ENCODE measurements at regions of chr4 and their contacts with region 1.

Region 1: DNA sequence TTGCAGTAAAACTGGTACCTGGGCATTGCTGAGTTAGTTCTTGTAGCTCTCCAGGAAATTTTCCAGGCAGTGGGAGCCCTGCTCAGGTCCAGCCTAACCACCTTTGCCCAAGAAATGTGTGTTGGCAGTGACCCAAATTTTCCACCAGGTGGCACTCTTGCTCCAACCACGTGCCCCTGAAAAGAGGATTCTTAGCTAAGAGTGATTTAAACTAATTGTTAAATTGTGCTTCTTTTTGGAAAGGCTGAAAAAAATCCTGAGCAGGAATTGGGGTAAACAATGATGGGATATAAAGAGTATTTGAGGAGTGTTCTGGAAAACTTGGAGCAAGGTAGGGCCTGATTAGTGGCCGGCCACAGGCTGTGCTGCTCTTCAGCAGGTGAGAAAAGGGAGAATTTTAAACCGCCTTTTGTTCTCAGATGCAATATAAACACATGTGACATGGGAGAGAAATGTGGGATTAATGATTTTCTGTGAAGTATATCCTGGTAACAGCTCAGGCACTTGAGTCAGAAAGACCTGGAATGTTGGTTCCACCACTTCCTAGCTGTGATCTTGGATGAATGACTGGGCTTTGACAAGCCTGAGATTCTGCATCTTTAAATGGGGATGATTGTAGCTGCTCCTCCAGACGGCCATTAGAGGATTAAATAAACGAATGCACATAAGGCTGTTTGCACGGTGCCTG is 219.6 kb downstream of the PTTG2 start:
- DNase-seq: peak; percentile 47 to 79 (median 69)
- ATAC-seq: peak; percentile 71
- H3K4me3 ChIP-seq: no peak overlapping the region
- H3K4me3 Mint-ChIP-seq: no peak overlapping the region
- H3K27ac ChIP-seq: no peak overlapping the region
- H3K27ac Mint-ChIP-seq: peak overlapping the region in 6 of 9 donors; percentile 2 to 55 (median 22)
- H3K4me1 ChIP-seq: peaks cover 17 to 21% of the 10 kb centered on the region in 2 donors
- H3K4me1 Mint-ChIP-seq: peaks cover 25 to 53% (median 46%) of the 10 kb centered on the region in 7 donors
- H3K27me3 ChIP-seq: no peaks in the 10 kb centered on the region
- H3K27me3 Mint-ChIP-seq: peaks cover 0 to 28% (median 0%) of the 10 kb centered on the region in 5 donors

Region 2: GRCh38 chr4:37503261-37503660 is 676.6 kb before region 1 on chr4:
- CTCF ChIA-PET with region 1: no interaction called
- POLR2A ChIA-PET with region 1: no interaction called
- intact Hi-C with region 1: no loop called
- DNase-seq: no peak
- ATAC-seq: no peak
- H3K4me3 ChIP-seq: no peak overlapping the region
- H3K4me3 Mint-ChIP-seq: no peak overlapping the region
- H3K27ac ChIP-seq: no peak overlapping the region
- H3K27ac Mint-ChIP-seq: no peak overlapping the region
- H3K4me1 ChIP-seq: no peaks in the 10 kb centered on the region
- H3K4me1 Mint-ChIP-seq: no peaks in the 10 kb centered on the region
- H3K27me3 ChIP-seq: no peaks in the 10 kb centered on the region
- H3K27me3 Mint-ChIP-seq: peaks cover 1 to 58% (median 37%) of the 10 kb centered on the region in 5 donors

Region 3: GRCh38 chr4:37803356-37803973 is 376.4 kb before region 1 on chr4:
- CTCF ChIA-PET with region 1: no interaction called
- POLR2A ChIA-PET with region 1: no interaction called
- intact Hi-C with region 1: no loop called
- DNase-seq: peak in 7 of 9 donors; percentile 18 to 60 (median 49)
- ATAC-seq: peak; percentile 54
- H3K4me3 ChIP-seq: no peak overlapping the region
- H3K4me3 Mint-ChIP-seq: no peak overlapping the region
- H3K27ac ChIP-seq: no peak overlapping the region
- H3K27ac Mint-ChIP-seq: no peak overlapping the region
- H3K4me1 ChIP-seq: no peaks in the 10 kb centered on the region
- H3K4me1 Mint-ChIP-seq: no peaks in the 10 kb centered on the region
- H3K27me3 ChIP-seq: no peaks in the 10 kb centered on the region
- H3K27me3 Mint-ChIP-seq: peaks cover 0 to 17% (median 0%) of the 10 kb centered on the region in 5 donors

Region 4: GRCh38 chr4:37896206-37896860 is 283.5 kb before region 1 on chr4:
- CTCF ChIA-PET with region 1: no interaction called
- POLR2A ChIA-PET with region 1: no interaction called
- intact Hi-C with region 1: no loop called
- DNase-seq: no peak
- ATAC-seq: no peak
- H3K4me3 ChIP-seq: no peak overlapping the region
- H3K4me3 Mint-ChIP-seq: peak overlapping the region in 4 of 10 donors; percentile 8 to 32 (median 21)
- H3K27ac ChIP-seq: no peak overlapping the region
- H3K27ac Mint-ChIP-seq: peak overlapping the region in 1 of 9 donors; percentile 68
- H3K4me1 ChIP-seq: peaks cover 10 to 14% of the 10 kb centered on the region in 2 donors
- H3K4me1 Mint-ChIP-seq: peaks cover 43 to 87% (median 76%) of the 10 kb centered on the region in 7 donors
- H3K27me3 ChIP-seq: no peaks in the 10 kb centered on the region
- H3K27me3 Mint-ChIP-seq: no peaks in the 10 kb centered on the region

Region 5: DNA sequence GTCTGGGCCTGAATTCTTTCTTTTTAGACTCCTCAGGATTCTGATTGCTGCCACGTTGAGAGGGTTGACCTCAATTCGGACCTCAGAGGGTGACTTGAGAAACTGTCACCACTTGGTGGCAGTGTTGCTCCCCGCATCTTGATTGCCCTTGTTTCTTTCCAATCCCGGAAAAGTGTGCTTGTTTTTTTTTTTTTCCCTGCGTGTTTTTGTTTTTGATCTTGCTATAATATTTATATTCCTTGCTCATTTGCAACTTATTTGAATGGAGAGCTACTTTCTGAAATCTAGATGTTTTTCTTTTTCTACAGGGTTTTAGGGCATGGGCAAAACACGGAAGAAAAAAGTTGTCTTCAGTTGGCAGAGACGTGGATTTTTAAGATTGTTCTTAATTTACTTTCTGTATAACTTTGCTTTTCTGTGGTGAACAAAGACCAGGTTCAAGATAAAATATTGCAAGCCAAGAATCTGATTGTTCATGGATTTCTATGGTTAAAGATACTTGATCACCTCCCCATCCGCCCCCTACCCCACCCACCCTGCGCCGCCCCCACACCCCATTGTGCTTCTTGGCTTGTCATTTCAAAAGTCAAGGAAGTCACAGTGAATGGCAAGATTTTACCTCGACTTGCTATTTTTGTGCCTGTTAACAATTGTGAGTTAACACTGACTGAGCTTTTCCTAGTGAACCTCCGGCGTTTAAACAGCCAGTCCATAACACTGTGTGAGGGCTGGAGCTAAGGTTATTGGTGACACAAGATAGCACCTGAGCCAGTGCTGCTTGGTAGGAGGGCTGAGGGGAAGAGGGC is 117.5 kb before region 1 on chr4:
- CTCF ChIA-PET with region 1: interaction called, 7 read pairs
- POLR2A ChIA-PET with region 1: no interaction called
- intact Hi-C with region 1: loop called in 1 of 2 experiments (anchors 1 kb)
- DNase-seq: peak; percentile 15 to 55 (median 41)
- ATAC-seq: peak; percentile 78
- H3K4me3 ChIP-seq: peak overlapping the region; percentile 33
- H3K4me3 Mint-ChIP-seq: peak overlapping the region; percentile 66 to 95 (median 84)
- H3K27ac ChIP-seq: no peak overlapping the region
- H3K27ac Mint-ChIP-seq: peak overlapping the region in 8 of 9 donors; percentile 35 to 80 (median 61)
- H3K4me1 ChIP-seq: no peaks in the 10 kb centered on the region
- H3K4me1 Mint-ChIP-seq: peaks cover 0 to 20% (median 10%) of the 10 kb centered on the region in 7 donors
- H3K27me3 ChIP-seq: no peaks in the 10 kb centered on the region
- H3K27me3 Mint-ChIP-seq: no peaks in the 10 kb centered on the region

Region 6: DNA sequence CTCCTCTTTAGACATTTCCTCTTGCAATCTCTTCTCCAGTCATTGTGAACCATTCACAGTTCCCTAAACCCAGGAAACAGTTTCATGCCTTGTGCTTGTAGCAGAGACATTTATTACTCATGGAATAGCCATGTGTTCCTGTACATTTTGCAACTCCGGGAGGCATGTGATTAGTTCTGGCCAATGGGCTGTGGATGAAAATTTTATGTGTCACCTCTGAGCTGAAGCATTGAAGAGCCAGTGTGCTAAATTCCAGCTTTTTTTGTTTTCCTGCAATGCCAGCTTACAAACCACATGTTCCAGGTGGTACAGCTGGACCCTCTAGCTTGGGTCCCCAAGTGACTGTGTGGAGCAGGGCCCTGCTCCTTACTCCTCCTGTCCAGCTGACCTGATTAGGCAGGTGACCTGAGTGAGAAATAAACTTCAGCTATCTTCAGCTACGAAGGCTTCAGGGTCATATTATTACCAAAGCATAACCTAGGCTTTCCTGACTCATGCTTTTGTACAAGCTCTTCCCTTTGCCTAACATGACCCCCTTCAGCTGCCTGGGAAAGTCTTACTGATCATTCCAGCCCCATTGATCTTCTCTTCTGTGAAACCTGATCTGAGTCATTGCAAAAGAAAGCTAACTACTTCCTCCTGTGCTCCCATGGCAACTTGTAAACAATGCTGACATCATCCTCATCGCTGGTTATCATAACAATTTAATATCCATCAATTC is 19.2 kb before region 1 on chr4:
- CTCF ChIA-PET with region 1: interaction called, 5 read pairs
- POLR2A ChIA-PET with region 1: no interaction called
- intact Hi-C with region 1: loop called (anchors 1 kb)
- DNase-seq: peak in 8 of 9 donors; percentile 14 to 71 (median 50)
- ATAC-seq: peak; percentile 85
- H3K4me3 ChIP-seq: no peak overlapping the region
- H3K4me3 Mint-ChIP-seq: peak overlapping the region in 2 of 10 donors; percentile 10 to 26
- H3K27ac ChIP-seq: no peak overlapping the region
- H3K27ac Mint-ChIP-seq: peak overlapping the region in 7 of 9 donors; percentile 35 to 81 (median 80)
- H3K4me1 ChIP-seq: peaks cover 10 to 19% of the 10 kb centered on the region in 2 donors
- H3K4me1 Mint-ChIP-seq: peaks cover 17 to 70% (median 35%) of the 10 kb centered on the region in 7 donors
- H3K27me3 ChIP-seq: no peaks in the 10 kb centered on the region
- H3K27me3 Mint-ChIP-seq: no peaks in the 10 kb centered on the region

Region 7: GRCh38 chr4:38279650-38280322 is 100.0 kb after region 1 on chr4:
- CTCF ChIA-PET with region 1: no interaction called
- POLR2A ChIA-PET with region 1: no interaction called
- intact Hi-C with region 1: no loop called
- DNase-seq: no peak
- ATAC-seq: no peak
- H3K4me3 ChIP-seq: no peak overlapping the region
- H3K4me3 Mint-ChIP-seq: no peak overlapping the region
- H3K27ac ChIP-seq: no peak overlapping the region
- H3K27ac Mint-ChIP-seq: no peak overlapping the region
- H3K4me1 ChIP-seq: no peaks in the 10 kb centered on the region
- H3K4me1 Mint-ChIP-seq: peaks cover 0 to 12% (median 4%) of the 10 kb centered on the region in 7 donors
- H3K27me3 ChIP-seq: no peaks in the 10 kb centered on the region
- H3K27me3 Mint-ChIP-seq: peaks cover 0 to 3% (median 0%) of the 10 kb centered on the region in 5 donors

Region 8: GRCh38 chr4:38319456-38320342 is 139.9 kb after region 1 on chr4:
- CTCF ChIA-PET with region 1: interaction called, 21 read pairs
- POLR2A ChIA-PET with region 1: interaction called, 5 read pairs
- intact Hi-C with region 1: loop called (anchors 1 kb)
- DNase-seq: peak; percentile 73 to 96 (median 83)
- ATAC-seq: peak; percentile 91
- H3K4me3 ChIP-seq: peak overlapping the region; percentile 38
- H3K4me3 Mint-ChIP-seq: peak overlapping the region; percentile 80 to 95 (median 88)
- H3K27ac ChIP-seq: peak overlapping the region; percentile 68
- H3K27ac Mint-ChIP-seq: peak overlapping the region; percentile 87 to 98 (median 94)
- H3K4me1 ChIP-seq: peaks cover 19 to 35% of the 10 kb centered on the region in 2 donors
- H3K4me1 Mint-ChIP-seq: peaks cover 33 to 75% (median 70%) of the 10 kb centered on the region in 7 donors
- H3K27me3 ChIP-seq: no peaks in the 10 kb centered on the region
- H3K27me3 Mint-ChIP-seq: peaks cover 0 to 10% (median 0%) of the 10 kb centered on the region in 5 donors

Region 9: DNA sequence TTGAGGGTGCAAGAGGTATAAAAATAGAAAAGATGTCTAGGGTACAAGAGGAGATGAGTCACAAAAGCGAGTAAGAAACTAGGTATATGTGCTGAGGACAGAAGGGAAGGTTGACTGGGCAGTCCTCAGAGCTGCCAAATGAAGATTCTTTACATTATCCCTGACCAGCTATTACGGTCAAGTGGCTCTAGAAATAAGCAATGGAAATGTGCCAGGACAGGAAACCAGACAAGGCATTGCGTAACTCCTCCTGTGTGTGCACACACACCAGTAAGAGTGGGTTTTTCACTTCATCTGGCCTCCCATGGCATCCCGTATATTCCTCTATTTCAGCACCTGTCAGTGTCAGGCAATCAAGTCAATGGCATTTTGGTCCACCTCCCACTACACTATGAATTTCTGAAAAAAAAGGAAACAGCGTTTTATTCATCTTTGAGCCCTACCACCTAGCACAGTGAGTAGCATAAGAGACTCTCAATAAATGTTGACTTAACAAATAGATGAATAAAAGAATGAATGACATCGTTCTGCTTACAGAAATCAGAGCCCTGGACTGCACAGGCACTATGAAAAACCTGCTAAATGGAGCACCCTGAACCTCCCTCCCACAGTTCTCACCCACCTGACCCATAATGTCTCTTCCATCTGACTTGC is 421.5 kb after region 1 on chr4:
- CTCF ChIA-PET with region 1: no interaction called
- POLR2A ChIA-PET with region 1: no interaction called
- intact Hi-C with region 1: loop called in 1 of 2 experiments (anchors 2 kb)
- DNase-seq: no peak
- ATAC-seq: no peak
- H3K4me3 ChIP-seq: no peak overlapping the region
- H3K4me3 Mint-ChIP-seq: no peak overlapping the region
- H3K27ac ChIP-seq: no peak overlapping the region
- H3K27ac Mint-ChIP-seq: peak overlapping the region in 4 of 9 donors; percentile 18 to 27 (median 20)
- H3K4me1 ChIP-seq: peaks cover 5% of the 10 kb centered on the region in 2 donors
- H3K4me1 Mint-ChIP-seq: peaks cover 16 to 40% (median 24%) of the 10 kb centered on the region in 7 donors
- H3K27me3 ChIP-seq: no peaks in the 10 kb centered on the region
- H3K27me3 Mint-ChIP-seq: peaks cover 0 to 10% (median 0%) of the 10 kb centered on the region in 5 donors

Region 10: DNA sequence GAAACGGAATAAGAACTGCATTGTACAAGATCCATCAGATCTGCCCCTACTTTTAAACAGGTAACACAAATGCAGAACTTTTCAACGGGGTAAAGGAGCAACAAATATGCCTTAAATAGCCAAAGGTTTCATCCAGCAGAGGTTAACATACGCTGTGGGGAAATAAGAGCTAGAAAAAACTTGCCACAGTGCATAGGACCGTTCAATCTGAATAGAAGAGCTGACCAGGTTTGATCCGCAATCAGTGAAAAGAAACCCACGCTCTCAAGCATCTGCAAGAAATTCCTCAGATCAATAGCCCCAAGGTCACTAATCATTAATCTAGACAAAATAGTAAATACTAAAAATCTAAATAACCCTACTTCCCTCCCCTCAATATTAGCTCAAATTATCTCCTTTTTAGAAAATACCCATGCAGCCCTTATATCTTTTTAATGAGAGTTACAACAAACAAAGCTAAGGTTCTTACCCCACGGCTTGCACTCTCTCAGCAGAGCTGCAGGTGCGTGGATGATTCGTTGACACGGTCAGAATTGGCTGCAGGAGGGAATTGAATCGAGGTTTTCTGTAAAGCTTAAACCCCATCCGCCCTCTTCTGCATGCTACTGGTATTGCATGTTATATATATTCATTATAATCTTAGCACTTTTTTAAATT is 602.7 kb after region 1 on chr4 and contains the start of gene TLR10:
- CTCF ChIA-PET with region 1: interaction called, 8 read pairs
- POLR2A ChIA-PET with region 1: no interaction called
- intact Hi-C with region 1: loop called in 1 of 2 experiments (anchors 1 kb)
- DNase-seq: peak in 7 of 9 donors; percentile 10 to 56 (median 43)
- ATAC-seq: peak; percentile 79
- H3K4me3 ChIP-seq: no peak within 1 kb of the TSS
- H3K4me3 Mint-ChIP-seq: peak within 1 kb of the TSS in 3 of 10 donors; percentile 3 to 58 (median 49)
- H3K27ac ChIP-seq: no peak within 1 kb of the TSS
- H3K27ac Mint-ChIP-seq: no peak within 1 kb of the TSS
- H3K4me1 ChIP-seq: no peaks in the 10 kb centered on the region
- H3K4me1 Mint-ChIP-seq: peaks cover 0 to 7% (median 6%) of the 10 kb centered on the region in 7 donors
- H3K27me3 ChIP-seq: no peaks in the 10 kb centered on the region
- H3K27me3 Mint-ChIP-seq: peaks cover 0 to 8% (median 0%) of the 10 kb centered on the region in 5 donors
- total RNA-seq, gene TLR10: 0.13 to 1.6 (median 0.58) TPM in 4 of 5 experiments, not detected in the other

Region 11: DNA sequence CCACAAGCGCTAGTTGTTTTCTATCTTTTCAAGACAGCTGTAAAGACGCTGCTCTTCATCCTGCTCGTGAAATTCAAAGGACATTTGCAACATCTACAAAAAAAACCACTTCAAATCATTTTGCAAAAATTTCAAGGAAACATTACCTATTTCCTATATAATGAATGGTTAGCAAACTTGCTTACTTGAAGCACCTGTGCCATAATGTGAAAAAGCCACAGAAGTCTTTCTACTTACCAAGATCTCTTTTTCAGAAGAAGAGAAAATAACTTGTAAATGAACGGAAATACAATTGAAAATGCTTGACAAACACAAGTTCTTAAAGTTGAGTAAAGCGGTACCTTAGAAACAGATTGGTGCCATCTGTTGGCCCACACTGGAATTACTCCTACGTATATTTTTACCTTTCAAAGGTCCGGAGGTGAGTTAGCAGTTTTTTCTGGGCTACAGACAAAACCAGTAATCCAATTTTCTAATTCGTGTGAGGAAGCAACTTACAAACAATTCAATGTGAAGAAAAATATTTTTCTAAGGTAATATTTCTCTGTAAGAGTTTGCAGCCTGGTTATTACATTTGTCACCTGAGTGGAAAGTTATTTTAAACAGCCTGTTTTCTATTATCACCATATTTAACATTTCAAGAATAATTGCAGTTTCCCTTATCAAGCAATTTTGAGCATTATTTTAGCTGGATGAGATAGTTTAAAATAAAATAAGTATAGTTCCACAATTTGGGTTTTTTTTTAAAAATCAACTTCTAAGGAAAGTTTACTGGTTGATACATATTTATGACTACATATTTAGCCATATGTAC is 676.9 kb after region 1 on chr4 and contains the start of gene TLR6:
- CTCF ChIA-PET with region 1: no interaction called
- POLR2A ChIA-PET with region 1: interaction called, 4 read pairs
- intact Hi-C with region 1: loop called (anchors 1 kb)
- DNase-seq: peak in 8 of 9 donors; percentile 37 to 90 (median 83)
- ATAC-seq: peak; percentile 83
- H3K4me3 ChIP-seq: peak within 1 kb of the TSS; percentile 14
- H3K4me3 Mint-ChIP-seq: peak within 1 kb of the TSS in 9 of 10 donors; percentile 62 to 81 (median 67)
- H3K27ac ChIP-seq: peak within 1 kb of the TSS; percentile 49
- H3K27ac Mint-ChIP-seq: peak within 1 kb of the TSS; percentile 76 to 93 (median 90)
- H3K4me1 ChIP-seq: peaks cover 0 to 26% of the 10 kb centered on the region in 2 donors
- H3K4me1 Mint-ChIP-seq: peaks cover 28 to 52% (median 46%) of the 10 kb centered on the region in 7 donors
- H3K27me3 ChIP-seq: no peaks in the 10 kb centered on the region
- H3K27me3 Mint-ChIP-seq: peaks cover 0 to 6% (median 0%) of the 10 kb centered on the region in 5 donors
- total RNA-seq, gene TLR6: 1.00 to 8.8 (median 1.9) TPM

Measured in naive thymus-derived CD4-positive, alpha-beta T cell (primary cell).